H1 (cell line): ENCODE measurements at regions of chr11 and their contacts with region 1.

Region 1: GRCh38 chr11:87097582-87097981 is 59.8 kb downstream of the TMEM135 start:
- DNase-seq: peak in 1 of 2 experiments; percentile 62
- H3K4me3 ChIP-seq: no peak overlapping the region
- H3K27ac ChIP-seq: no peak overlapping the region
- H3K4me1 ChIP-seq: no peaks in the 10 kb centered on the region
- H3K27me3 ChIP-seq: no peaks in the 10 kb centered on the region
- CTCF ChIP-seq: peak; percentile 39 to 82 (median 61)
- EP300 ChIP-seq: no peak
- POLR2A ChIP-seq: no peak
- RAD21 ChIP-seq: peak; percentile 48 to 69

Region 2: GRCh38 chr11:87072787-87073186 is 24.8 kb before region 1 on chr11:
- CTCF ChIA-PET with region 1: interaction called, 10 read pairs
- POLR2A ChIA-PET with region 1: no interaction called
- DNase-seq: no peak
- H3K4me3 ChIP-seq: no peak overlapping the region
- H3K27ac ChIP-seq: no peak overlapping the region
- H3K4me1 ChIP-seq: no peaks in the 10 kb centered on the region
- H3K27me3 ChIP-seq: no peaks in the 10 kb centered on the region
- CTCF ChIP-seq: no peak
- EP300 ChIP-seq: no peak
- POLR2A ChIP-seq: no peak
- RAD21 ChIP-seq: no peak

Region 3: DNA sequence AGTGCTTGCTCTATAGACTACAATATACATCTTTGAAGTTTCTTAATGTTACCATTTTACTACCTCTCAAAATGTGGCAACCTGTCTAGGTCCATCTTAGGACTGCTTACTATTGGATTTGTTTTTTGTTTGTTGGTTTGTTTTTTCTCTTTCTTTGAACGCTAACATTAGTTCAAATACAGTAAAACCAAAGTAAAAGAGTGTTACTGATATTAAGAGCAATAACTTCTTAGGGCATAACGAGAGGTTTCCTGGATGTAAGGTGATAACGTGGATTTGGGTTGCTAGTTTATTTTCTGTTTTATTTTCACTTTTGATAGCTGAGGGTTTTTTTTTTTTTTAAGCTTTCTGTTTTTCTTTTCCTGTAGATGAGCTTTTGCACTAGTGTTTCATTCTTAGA is 16.2 kb before region 1 on chr11:
- CTCF ChIA-PET with region 1: interaction called, 20 read pairs
- POLR2A ChIA-PET with region 1: interaction called, 4 read pairs
- DNase-seq: no peak
- H3K4me3 ChIP-seq: no peak overlapping the region
- H3K27ac ChIP-seq: no peak overlapping the region
- H3K4me1 ChIP-seq: peaks cover 0 to 5% (median 0%) of the 10 kb centered on the region in 4 experiments; a peak in 1 of 7 replicates
- H3K27me3 ChIP-seq: peaks cover 0 to 28% (median 5%) of the 10 kb centered on the region in 4 experiments; a peak in 5 of 7 replicates
- CTCF ChIP-seq: no peak
- EP300 ChIP-seq: no peak
- POLR2A ChIP-seq: no peak
- RAD21 ChIP-seq: no peak

Region 4: GRCh38 chr11:87114093-87114492 is 16.5 kb after region 1 on chr11:
- CTCF ChIA-PET with region 1: interaction called, 18 read pairs
- POLR2A ChIA-PET with region 1: no interaction called
- DNase-seq: no peak
- H3K4me3 ChIP-seq: no peak overlapping the region
- H3K27ac ChIP-seq: no peak overlapping the region
- H3K4me1 ChIP-seq: no peaks in the 10 kb centered on the region
- H3K27me3 ChIP-seq: no peaks in the 10 kb centered on the region
- CTCF ChIP-seq: no peak
- EP300 ChIP-seq: no peak
- POLR2A ChIP-seq: no peak
- RAD21 ChIP-seq: no peak